HepG2 (cell line): ENCODE measurements at regions of chr6 and their contacts with region 1.

Region 1: GRCh38 chr6:100479179-100480035 is 14.7 kb upstream of the SIM1 start:
- DNase-seq: peak; percentile 27
- ATAC-seq: peak; percentile 75
- H3K4me3 ChIP-seq: no peak overlapping the region
- H3K27ac ChIP-seq: no peak overlapping the region
- H3K4me1 ChIP-seq: peaks cover 15% of the 10 kb centered on the region
- H3K27me3 ChIP-seq: peaks cover 3% of the 10 kb centered on the region in 2 experiments; a peak in 3 of 5 replicates
- CTCF ChIP-seq: peak; percentile 73
- EP300 ChIP-seq: no peak
- POLR2A ChIP-seq: no peak
- RAD21 ChIP-seq: 0 out of 2 replicates have a peak, but pooled peaks have one; percentile 28

Region 2: GRCh38 chr6:99868074-99868702 is 611.2 kb before region 1 on chr6:
- CTCF ChIA-PET with region 1: no interaction called
- POLR2A ChIA-PET with region 1: no interaction called
- in situ Hi-C with region 1: no loop called
- intact Hi-C with region 1: loop called (anchors 5 kb)
- DNase-seq: peak; percentile 47
- ATAC-seq: peak; percentile 94
- H3K4me3 ChIP-seq: no peak overlapping the region; a peak in 1 of 6 replicates
- H3K27ac ChIP-seq: no peak overlapping the region
- H3K4me1 ChIP-seq: no peaks in the 10 kb centered on the region
- H3K27me3 ChIP-seq: peaks cover 0 to 18% of the 10 kb centered on the region in 2 experiments; a peak in 2 of 5 replicates
- CTCF ChIP-seq: peak; percentile 88
- EP300 ChIP-seq: no peak
- POLR2A ChIP-seq: no peak
- RAD21 ChIP-seq: 0 out of 2 replicates have a peak, but pooled peaks have one; percentile 27

Region 3: GRCh38 chr6:100078509-100078908 is 400.9 kb before region 1 on chr6:
- CTCF ChIA-PET with region 1: no interaction called
- POLR2A ChIA-PET with region 1: no interaction called
- in situ Hi-C with region 1: no loop called
- intact Hi-C with region 1: loop called (anchors 1 kb)
- DNase-seq: peak; percentile 20
- ATAC-seq: peak; percentile 94
- H3K4me3 ChIP-seq: no peak overlapping the region
- H3K27ac ChIP-seq: no peak overlapping the region
- H3K4me1 ChIP-seq: no peaks in the 10 kb centered on the region
- H3K27me3 ChIP-seq: no peaks in the 10 kb centered on the region
- CTCF ChIP-seq: peak; percentile 42
- EP300 ChIP-seq: no peak
- POLR2A ChIP-seq: no peak
- RAD21 ChIP-seq: no peak

Region 4: GRCh38 chr6:100116411-100117194 is 362.8 kb before region 1 on chr6:
- CTCF ChIA-PET with region 1: interaction called, 13 read pairs
- POLR2A ChIA-PET with region 1: interaction called, 3 read pairs
- in situ Hi-C with region 1: loop called (anchors 5 kb)
- intact Hi-C with region 1: loop called (anchors 1 kb)
- DNase-seq: peak; percentile 43
- ATAC-seq: peak; percentile 89
- H3K4me3 ChIP-seq: no peak overlapping the region
- H3K27ac ChIP-seq: no peak overlapping the region
- H3K4me1 ChIP-seq: no peaks in the 10 kb centered on the region
- H3K27me3 ChIP-seq: no peaks in the 10 kb centered on the region; a peak in 1 of 5 replicates
- CTCF ChIP-seq: peak; percentile 63
- EP300 ChIP-seq: no peak
- POLR2A ChIP-seq: no peak
- RAD21 ChIP-seq: no peak

Region 5: DNA sequence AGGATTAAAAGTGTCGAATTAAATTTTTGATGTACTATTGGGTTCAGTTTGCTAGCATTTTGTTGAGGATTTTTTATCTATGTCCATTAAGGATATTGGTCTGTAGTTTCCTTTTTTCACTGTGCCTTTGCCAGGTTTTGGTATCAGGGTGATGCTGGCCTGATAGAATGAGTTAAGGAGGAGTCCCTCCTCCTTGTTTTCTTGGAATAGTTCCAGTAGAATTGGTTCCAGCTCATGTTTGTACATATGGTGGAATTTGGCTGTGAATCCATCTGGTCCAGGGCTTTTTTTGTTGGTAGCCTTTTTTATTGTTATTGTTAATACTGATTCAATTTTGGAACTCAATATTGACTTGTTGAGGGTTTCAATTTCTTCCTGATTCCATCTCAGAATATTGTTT is 156.5 kb before region 1 on chr6:
- CTCF ChIA-PET with region 1: no interaction called
- POLR2A ChIA-PET with region 1: no interaction called
- in situ Hi-C with region 1: no loop called
- intact Hi-C with region 1: loop called (anchors 1 kb)
- DNase-seq: no peak
- ATAC-seq: no peak
- H3K4me3 ChIP-seq: no peak overlapping the region
- H3K27ac ChIP-seq: no peak overlapping the region
- H3K4me1 ChIP-seq: no peaks in the 10 kb centered on the region
- H3K27me3 ChIP-seq: no peaks in the 10 kb centered on the region
- CTCF ChIP-seq: no peak
- EP300 ChIP-seq: no peak
- POLR2A ChIP-seq: no peak
- RAD21 ChIP-seq: no peak

Region 6: DNA sequence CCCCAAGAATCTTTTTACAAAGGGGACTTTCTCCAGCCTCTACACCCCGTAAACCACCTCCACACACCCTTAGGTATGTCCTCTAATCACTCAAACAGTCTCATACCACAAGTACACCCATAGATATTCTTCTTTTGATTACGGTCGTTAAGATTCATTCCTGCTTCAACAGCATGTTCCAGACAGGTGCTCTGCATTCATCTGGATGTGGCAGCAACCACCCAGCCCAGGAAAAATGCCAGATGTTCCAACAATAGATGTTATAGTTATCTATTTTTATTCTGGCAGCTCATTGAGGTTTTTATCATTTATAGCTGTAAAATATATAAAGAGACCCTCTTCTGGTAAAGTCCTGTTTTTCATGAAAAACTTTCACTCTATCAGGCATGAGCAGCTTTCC is 75.4 kb before region 1 on chr6:
- CTCF ChIA-PET with region 1: no interaction called
- POLR2A ChIA-PET with region 1: no interaction called
- in situ Hi-C with region 1: no loop called
- intact Hi-C with region 1: no loop called
- DNase-seq: no peak
- ATAC-seq: no peak
- H3K4me3 ChIP-seq: no peak overlapping the region
- H3K27ac ChIP-seq: no peak overlapping the region
- H3K4me1 ChIP-seq: no peaks in the 10 kb centered on the region
- H3K27me3 ChIP-seq: no peaks in the 10 kb centered on the region
- CTCF ChIP-seq: no peak
- EP300 ChIP-seq: no peak
- POLR2A ChIP-seq: no peak
- RAD21 ChIP-seq: no peak

Region 7: DNA sequence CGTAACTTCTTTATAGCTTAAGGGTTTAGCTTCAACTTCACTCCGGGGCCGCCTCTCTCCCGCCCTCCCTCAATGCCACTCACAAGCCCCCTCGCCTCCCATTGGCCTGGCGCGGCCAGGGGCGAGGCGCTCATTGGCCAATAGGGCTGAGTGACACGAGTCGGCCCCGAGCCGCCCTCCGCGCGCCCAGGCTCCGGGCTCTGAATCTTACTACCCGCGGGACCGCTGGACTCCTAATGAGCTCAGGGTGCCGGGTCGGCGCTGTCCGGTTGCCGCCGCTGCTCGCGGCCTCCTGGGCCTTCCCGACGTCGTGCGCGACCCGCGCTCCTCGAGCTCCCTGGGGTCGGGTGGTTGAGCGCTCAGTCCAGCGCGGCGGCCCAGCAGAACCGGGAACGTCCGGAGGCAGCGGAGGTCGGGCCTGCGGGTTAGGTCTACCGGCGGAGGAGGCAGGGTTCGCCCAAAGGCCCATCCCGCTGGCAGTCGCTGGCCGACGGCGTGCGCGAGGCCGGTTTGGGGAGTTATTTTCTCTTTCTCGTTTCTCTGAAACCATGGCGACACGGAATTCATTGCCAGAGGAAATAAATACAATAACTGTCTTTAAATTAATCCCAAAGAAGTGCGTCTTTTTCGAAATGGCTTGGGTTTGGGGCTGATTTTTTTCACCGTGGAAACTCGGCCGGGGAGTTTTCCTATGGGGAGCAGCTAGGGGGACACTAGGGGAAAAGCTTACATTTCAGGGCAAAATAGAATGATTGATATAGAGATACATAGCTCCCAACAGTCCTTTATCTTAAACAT is 14.3 kb before region 1 on chr6 and contains the start of gene SIM1:
- CTCF ChIA-PET with region 1: no interaction called
- POLR2A ChIA-PET with region 1: no interaction called
- in situ Hi-C with region 1: no loop called
- intact Hi-C with region 1: no loop called
- DNase-seq: no peak
- ATAC-seq: no peak
- H3K4me3 ChIP-seq: no peak within 1 kb of the TSS
- H3K27ac ChIP-seq: no peak within 1 kb of the TSS
- H3K4me1 ChIP-seq: peaks cover 14% of the 10 kb centered on the region; the same call in 1 of the 2 replicates
- H3K27me3 ChIP-seq: peaks cover 6 to 57% of the 10 kb centered on the region in 2 experiments
- CTCF ChIP-seq: no peak
- EP300 ChIP-seq: no peak
- POLR2A ChIP-seq: no peak
- RAD21 ChIP-seq: no peak
- total RNA-seq, gene SIM1: not detected in 2 replicates